Ascending aorta (tissue), 2 donors: ENCODE measurements at regions of chr6 and their contacts with region 1.

Region 1: DNA sequence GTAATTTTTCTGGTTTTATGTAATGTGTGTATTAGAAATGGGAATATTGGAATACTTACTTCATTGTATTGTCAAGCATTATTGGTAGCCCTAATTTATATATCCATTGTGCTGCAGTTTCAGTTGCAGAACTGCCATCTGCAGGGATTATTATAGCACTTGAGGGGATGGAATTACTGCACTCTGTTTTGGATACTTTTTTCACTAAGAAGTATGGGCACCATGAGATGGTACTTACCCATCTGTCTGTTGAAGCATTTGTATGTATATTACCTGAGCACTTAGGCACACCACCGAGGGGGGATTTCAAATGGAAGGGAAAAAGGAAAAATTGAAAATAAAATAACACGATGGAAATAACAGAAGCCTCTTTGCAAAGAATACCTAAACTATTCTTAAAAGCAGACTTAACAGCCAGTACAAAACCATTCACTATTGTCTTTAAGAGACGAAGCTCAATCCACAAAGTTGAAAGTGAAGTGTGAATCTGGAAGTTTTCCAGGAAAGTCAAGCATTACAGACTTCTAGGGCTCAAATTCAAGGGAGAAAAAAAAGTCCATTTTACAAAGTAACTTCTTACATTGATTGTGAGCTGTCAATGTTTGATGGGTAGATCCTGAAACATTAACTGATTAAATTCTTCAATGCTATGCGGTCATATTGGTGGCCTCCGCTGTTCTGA is 318.7 kb downstream of the SOX4 start:
- DNase-seq: no peak
- H3K4me3 ChIP-seq: no peak overlapping the region
- H3K27ac ChIP-seq: no peak overlapping the region
- H3K4me1 ChIP-seq: peaks cover 4 to 10% of the 10 kb centered on the region in 2 donors
- H3K27me3 ChIP-seq: no peaks in the 10 kb centered on the region
- CTCF ChIP-seq: no peak

Region 2: DNA sequence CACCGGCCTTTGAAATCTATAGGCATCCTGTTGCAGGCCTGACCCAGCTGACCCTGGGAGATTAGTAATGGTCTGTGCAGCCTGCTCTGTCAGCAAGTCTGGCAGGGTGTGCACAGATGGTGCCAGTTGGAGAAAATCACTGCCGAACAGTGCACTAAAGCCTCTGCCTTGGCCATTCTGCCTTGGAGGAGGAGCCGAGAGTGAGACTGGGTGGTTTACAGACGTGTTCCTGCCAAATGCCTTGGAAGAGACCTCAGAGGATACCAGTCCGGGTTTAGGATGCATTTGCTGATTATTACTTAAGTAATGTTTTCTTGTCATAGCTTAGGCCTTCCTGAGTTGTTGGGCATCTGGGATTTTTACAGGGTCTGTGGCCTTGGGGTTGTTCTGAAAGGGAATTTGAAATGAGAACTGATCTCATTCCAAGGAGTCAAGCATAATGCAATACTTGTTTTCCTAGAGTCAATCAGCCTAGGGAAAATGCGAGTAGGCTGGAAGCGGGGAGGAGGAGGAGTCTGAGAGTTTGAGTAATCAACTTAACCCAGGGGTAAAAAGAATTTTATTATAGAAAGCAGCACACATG is 26.7 kb before region 1 on chr6:
- intact Hi-C with region 1: loop called (anchors 2 kb)
- DNase-seq: peak; percentile 23 to 85
- H3K4me3 ChIP-seq: peak overlapping the region in 1 of 2 donors; percentile 22
- H3K27ac ChIP-seq: peak overlapping the region; percentile 66 to 75
- H3K4me1 ChIP-seq: peaks cover 8 to 27% of the 10 kb centered on the region in 2 donors
- H3K27me3 ChIP-seq: no peaks in the 10 kb centered on the region
- CTCF ChIP-seq: no peak

Region 3: DNA sequence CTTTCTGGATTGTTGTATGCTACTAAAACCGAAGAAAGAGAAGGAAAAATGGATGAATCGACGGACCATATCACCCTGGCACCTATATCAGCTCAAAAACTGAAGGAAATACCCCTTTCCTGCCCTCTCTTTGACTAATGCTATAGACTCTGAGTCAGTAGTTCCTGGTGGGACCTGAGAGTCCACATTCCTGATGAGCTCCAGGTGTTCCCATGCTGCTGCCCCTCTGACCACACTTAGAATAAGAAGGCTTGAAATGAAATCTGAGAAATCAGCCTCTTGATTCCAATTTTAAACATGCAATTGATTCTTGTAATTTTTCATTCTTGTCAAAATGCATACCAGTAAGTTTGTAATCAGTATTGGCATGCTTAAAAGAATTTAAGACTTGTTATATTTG is 309.3 kb after region 1 on chr6:
- intact Hi-C with region 1: no loop called
- DNase-seq: no peak
- H3K4me3 ChIP-seq: no peak overlapping the region
- H3K27ac ChIP-seq: no peak overlapping the region
- H3K4me1 ChIP-seq: no peaks in the 10 kb centered on the region
- H3K27me3 ChIP-seq: no peaks in the 10 kb centered on the region
- CTCF ChIP-seq: no peak

Region 4: DNA sequence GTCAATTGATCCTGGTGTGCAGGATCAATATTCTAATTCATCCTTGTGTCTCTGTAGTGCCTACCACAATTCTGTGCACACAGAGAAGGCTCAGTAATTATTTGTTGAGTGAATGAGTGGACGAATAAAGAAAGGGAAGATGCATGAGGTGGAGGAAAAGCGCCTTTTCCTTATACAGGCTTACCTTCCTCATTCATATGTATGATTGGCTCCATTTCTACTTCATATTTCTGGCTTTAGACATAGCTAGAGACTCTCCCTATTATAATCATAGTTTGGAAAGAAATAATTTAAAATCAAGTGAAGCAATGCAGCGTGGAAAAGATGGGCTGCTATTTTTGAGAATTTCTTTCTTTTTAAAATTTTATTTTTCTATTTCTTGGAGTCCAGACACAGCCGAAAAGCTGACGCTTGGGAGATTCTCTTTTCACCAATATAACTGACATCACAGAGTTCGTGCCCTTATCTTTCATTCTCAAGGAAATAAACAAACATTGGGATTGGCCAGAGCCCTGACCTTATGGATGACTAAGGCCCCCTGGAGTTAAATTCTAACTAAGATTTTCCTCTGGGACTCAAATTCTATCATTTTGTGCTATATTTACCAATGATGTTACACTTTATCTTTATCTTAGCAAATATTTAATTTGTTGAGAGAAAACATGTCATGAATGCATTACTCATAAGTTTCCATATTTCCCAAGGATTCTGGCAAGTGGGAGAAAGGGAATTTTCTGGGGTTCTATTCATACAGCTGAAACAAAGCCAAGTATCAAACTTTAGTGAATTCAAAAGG is 336.4 kb after region 1 on chr6:
- intact Hi-C with region 1: no loop called
- DNase-seq: no peak
- H3K4me3 ChIP-seq: no peak overlapping the region
- H3K27ac ChIP-seq: no peak overlapping the region
- H3K4me1 ChIP-seq: peaks cover 0 to 7% of the 10 kb centered on the region in 2 donors
- H3K27me3 ChIP-seq: no peaks in the 10 kb centered on the region
- CTCF ChIP-seq: no peak